Panc1 (cell line): ENCODE measurements at regions of chr16 and their contacts with region 1.

Region 1: DNA sequence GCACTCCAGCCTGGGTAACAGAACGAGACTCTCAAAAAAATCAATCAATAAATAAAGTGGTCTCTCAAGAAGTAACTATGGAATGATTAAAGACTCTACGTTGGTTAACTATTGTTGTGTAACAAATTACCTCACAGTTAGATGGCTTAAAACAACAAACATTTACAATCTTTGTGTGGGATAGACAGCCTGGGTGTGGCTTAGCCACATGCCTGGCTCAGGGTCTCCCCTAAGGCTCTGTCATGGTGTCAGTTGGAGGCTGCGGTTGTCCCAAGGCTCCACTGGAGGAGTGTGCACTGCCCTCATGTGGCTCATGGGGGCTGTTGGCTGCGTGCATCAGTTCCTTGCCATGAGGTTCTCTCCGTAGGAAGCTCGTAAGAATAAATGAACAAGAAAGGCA is 294.5 kb downstream of the SNX29 start:
- DNase-seq: no peak
- ATAC-seq: peak; percentile 66; the same call in 1 of the 2 replicates
- H3K4me3 ChIP-seq: no peak overlapping the region
- H3K27ac ChIP-seq: no peak overlapping the region
- H3K4me1 ChIP-seq: no peaks in the 10 kb centered on the region
- H3K27me3 ChIP-seq: no peaks in the 10 kb centered on the region
- CTCF ChIP-seq: no peak; the same call in 1 of the 2 replicates

Region 2: DNA sequence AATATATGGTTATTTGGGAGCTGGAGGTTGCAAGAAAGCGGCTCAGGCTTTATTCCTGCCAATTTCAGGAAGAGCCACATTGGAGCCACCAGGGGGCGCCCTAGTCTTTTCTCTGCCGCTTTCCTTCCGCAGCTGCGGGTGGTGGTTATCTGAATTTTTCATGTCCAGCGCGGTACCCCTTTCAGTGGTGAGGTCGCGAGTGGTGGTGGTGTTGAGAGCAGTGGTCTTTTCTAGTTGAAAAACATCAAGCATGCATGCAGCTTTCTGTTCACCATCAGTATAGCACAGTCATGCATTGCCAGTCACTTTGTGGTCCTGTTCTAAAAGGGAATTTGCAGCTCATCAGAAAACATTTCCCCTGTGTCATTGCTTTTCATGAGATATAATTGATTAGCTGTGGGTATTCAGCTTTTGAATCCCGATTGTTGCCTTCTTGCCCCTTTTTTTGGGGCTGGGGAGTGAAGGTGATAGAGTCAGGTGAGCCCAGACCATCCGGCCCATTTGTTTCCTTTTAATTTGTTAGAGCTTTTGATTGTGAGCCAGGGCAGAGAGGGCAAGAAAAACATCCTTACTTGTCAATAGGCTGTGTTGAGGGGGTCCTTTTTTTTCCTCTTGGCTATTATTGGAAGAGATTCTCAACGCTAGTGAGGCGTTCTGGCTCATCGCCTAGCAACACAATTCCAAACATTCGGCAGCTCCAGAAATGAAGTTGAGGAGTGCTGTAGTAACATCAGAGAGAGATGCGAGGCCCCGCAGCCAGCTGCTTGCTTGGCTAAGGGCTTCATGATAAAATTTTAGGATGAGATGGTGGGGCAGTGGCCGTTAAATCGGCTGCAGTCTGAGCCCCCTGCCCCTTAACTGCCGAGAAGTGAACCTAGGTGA is 175.5 kb before region 1 on chr16:
- CTCF ChIA-PET with region 1: interaction called, 4 read pairs
- POLR2A ChIA-PET with region 1: no interaction called
- in situ Hi-C with region 1: no loop called
- intact Hi-C with region 1: loop called (anchors 10 kb)
- DNase-seq: no peak
- ATAC-seq: peak; percentile 60; the same call in 1 of the 2 replicates
- H3K4me3 ChIP-seq: no peak overlapping the region
- H3K27ac ChIP-seq: no peak overlapping the region
- H3K4me1 ChIP-seq: 0 out of 2 replicates have a peak, but pooled peaks cover 4% of the 10 kb centered on the region
- H3K27me3 ChIP-seq: no peaks in the 10 kb centered on the region
- CTCF ChIP-seq: peak; percentile 94

Region 3: DNA sequence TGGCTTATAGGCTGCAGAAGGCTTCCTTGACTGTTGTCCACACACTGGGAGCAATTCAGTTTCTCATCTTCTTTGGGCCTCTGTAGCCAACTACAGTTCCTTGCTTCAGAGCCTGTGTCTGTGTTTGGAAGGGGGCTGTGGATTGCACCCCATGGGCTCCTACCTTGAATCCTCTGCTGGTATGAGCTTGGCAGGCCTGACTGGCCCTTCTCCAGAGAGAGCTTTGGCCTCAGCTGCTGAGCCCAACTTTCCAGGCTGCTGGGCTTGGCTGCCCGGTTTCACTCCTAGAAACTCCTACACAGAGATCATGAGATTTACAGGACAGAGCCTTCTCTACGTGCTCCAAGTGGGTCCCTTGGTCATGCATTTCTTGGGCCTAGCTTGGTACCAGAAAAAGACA is 59.9 kb after region 1 on chr16:
- CTCF ChIA-PET with region 1: no interaction called
- POLR2A ChIA-PET with region 1: no interaction called
- in situ Hi-C with region 1: no loop called
- intact Hi-C with region 1: loop called (anchors 10 kb)
- DNase-seq: no peak
- ATAC-seq: no peak
- H3K4me3 ChIP-seq: no peak overlapping the region
- H3K27ac ChIP-seq: no peak overlapping the region
- H3K4me1 ChIP-seq: no peaks in the 10 kb centered on the region
- H3K27me3 ChIP-seq: no peaks in the 10 kb centered on the region
- CTCF ChIP-seq: no peak

Region 4: DNA sequence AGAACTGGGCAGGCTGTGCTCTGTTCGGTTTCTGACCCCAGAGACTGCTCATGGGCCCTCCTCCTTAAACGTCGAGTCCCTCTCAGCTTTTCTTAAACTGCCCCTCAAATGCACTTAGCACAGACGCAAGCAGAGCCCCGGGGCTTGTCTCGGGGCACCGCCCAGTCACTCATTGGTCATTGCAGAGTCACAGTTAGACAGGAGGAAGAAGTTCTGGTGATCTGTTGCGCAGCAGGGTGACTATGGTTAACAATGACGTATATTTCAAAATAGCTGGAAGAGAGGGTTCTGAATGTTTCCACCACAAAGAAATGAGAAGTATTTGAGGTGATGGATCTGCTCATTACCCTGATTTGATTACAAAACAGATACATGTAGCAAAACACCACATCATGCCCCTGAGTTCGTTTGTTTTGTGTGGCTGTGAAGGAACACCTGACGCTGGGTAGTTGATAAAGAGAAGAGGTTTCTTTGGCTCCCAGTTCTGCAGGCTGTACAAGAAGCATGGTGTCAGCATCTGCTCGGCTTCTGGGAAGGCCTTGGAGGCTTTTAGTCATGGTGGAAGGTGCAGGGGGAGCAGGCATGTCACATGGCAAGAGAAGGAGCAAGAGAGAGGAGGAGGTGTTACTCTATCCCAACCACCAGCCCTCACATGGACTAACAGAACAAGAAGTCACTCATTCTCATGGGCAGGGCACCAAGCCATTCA is 145.3 kb after region 1 on chr16:
- CTCF ChIA-PET with region 1: no interaction called
- POLR2A ChIA-PET with region 1: no interaction called
- in situ Hi-C with region 1: no loop called
- intact Hi-C with region 1: no loop called
- DNase-seq: no peak
- ATAC-seq: no peak
- H3K4me3 ChIP-seq: no peak overlapping the region
- H3K27ac ChIP-seq: no peak overlapping the region
- H3K4me1 ChIP-seq: no peaks in the 10 kb centered on the region
- H3K27me3 ChIP-seq: no peaks in the 10 kb centered on the region
- CTCF ChIP-seq: no peak